CD14-positive monocyte (primary cell): ENCODE measurements at regions of chr17 and their contacts with region 1.

Region 1: DNA sequence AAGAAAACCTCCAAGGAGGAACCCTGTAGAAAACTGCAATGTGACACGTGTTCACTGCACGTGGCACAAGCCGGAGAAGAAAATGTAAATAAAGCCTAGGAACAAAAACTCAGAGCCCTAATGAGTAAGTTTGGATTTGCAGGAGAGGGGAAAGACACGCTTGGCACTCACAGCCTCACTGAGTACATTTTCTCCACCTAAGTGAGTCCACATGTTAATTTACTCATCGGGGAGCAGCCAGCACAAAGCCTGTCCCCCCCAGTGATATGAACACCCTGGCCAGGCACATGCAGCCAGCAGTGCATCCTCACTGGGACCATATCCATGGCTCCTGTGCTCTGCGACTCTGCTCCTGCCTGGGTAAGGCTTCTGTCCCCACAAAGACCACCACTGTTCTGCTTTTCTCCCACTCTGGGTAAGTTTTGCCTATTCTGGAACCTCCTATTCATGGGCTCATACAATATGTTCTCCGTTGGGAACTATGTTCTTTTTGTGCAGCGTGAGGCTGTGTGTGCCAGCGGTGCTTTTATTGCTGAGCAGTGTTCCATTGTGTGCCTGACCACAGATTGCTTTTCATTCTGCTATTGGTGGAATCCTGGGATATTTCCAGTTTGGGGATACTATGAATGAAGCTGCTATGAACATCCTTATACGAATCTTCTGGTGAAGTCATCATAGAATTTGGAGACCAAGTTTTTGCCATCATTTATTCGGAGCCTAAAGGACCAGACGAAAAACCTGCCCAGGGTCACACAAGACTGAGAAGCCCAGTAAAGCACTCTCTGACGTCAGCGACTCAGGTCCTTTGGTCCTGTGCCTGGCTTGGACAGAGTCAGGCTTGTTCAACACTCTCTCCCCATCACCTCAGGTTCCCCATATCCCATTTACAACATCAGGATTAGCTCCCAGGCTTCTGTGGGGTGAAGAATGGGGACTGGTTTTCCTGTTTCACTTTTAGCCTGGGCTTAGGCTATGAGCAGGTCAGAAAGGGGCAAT is 53.3 kb downstream of the RNF112 start:
- DNase-seq: peak in 1 of 3 donors; percentile 14
- H3K4me3 ChIP-seq: peak overlapping the region in 2 of 3 experiments; percentile 50 to 69
- H3K4me3 Mint-ChIP-seq: peak overlapping the region; percentile 64 to 86
- H3K27ac ChIP-seq: peak overlapping the region; percentile 90 to 91
- H3K27ac Mint-ChIP-seq: peak overlapping the region; percentile 96 to 99 (median 98)
- H3K4me1 ChIP-seq: peaks cover 48 to 57% of the 10 kb centered on the region in 2 donors
- H3K4me1 Mint-ChIP-seq: peaks cover 48% of the 10 kb centered on the region
- H3K27me3 ChIP-seq: no peaks in the 10 kb centered on the region
- H3K27me3 Mint-ChIP-seq: peaks cover 0 to 3% (median 0%) of the 10 kb centered on the region in 3 donors
- CTCF ChIP-seq: no peak

Region 2: DNA sequence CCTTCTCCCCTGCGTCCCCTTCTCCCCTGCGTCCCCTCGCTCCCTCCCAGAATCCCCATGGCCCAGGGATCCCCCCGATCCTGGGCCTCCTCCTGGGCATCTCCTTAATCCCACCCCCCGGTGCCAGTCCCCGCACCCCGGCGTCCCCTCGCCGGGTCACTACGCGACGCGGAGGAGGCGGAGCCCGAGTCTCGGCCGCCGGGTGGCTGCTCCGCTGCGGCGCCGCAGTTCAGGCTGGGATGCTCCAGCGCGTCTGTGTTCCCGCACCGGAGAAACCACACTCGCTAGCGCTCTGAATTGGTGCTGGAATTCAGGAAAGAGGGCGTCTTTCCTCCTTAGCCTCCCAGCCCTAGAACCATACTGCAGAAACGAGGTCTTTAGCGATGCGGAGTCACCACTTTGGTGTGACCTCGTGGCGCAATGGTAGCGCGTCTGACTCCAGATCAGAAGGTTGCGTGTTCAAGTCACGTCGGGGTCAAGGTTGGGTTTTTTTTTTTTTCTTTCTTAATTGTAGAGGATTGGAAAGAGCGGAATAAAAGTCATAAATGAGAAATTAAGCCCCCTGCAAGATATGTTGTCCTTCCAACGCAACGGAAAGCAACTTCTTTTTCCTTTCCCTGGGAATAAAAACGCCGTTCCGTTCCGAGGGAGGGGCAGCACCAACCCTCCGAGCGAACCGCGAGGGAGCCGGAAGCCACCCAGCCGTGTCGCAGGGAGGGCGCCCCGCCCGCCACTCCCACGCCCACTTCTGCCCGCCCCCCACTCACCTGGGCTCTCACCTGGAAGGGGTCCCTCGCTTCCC is 43.6 kb after region 1 on chr17:
- intact Hi-C with region 1: loop called in 1 of 2 experiments (anchors 5 kb)
- DNase-seq: peak; percentile 81 to 84 (median 84)
- H3K4me3 ChIP-seq: peak overlapping the region; percentile 57 to 90 (median 67)
- H3K4me3 Mint-ChIP-seq: peak overlapping the region; percentile 89 to 96
- H3K27ac ChIP-seq: peak overlapping the region in 1 of 2 donors; percentile 31
- H3K27ac Mint-ChIP-seq: peak overlapping the region; percentile 16 to 92 (median 77)
- H3K4me1 ChIP-seq: peaks cover 6 to 11% of the 10 kb centered on the region in 2 donors
- H3K4me1 Mint-ChIP-seq: peaks cover 6% of the 10 kb centered on the region
- H3K27me3 ChIP-seq: peaks cover 0 to 6% of the 10 kb centered on the region in 2 donors
- H3K27me3 Mint-ChIP-seq: peaks cover 12 to 31% (median 28%) of the 10 kb centered on the region in 3 donors
- CTCF ChIP-seq: no peak